HEK293 (cell line): ENCODE measurements at regions of chr6 and their contacts with region 1.

Region 1: DNA sequence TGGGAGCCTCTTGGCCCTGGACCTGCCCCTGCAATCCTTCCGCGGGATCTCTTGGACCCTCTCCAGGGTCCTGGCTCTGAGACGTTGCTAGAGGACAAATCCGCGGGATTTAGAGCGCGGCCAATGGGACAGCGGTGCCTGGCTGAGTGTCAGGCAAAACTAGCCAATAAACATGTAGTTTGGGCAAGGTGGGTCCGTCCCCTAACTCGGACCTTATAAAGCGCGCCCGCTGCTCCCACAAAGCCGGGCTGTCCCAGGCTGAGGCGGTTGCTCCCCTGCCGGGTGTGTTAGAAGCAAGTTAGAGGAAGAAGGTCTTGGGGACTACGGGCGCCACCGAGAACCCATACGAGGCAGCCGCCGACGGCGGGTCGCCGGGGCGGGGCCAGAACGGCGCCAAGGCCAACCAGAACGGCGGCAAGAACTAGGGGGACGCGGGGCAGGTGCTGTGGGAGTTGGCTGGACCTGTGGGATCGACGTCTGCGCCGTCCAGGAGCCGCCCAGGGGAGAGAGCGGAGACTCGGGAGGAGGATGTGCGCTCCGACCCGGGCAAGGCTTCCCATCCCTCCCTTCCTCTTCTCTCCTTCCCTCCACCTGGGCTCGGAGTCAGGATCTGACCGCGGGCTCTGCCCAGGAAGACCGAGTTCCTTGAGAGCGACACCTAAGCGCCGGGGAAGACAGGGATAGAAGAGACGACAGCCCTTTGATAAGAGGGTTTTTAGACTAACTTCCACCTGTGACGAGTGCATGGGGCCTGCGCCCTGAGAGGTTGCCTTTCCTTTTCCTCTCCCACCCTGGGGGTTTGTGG is 6.5 kb upstream of the TMEM14A start:
- H3K4me3 ChIP-seq: peak overlapping the region; percentile 52
- H3K27ac ChIP-seq: peak overlapping the region; percentile 76
- H3K4me1 ChIP-seq: peaks cover 10% of the 10 kb centered on the region; the same call in 1 of the 2 replicates
- CTCF ChIP-seq: 0 out of 2 replicates have a peak, but pooled peaks have one; percentile 39

Region 2: DNA sequence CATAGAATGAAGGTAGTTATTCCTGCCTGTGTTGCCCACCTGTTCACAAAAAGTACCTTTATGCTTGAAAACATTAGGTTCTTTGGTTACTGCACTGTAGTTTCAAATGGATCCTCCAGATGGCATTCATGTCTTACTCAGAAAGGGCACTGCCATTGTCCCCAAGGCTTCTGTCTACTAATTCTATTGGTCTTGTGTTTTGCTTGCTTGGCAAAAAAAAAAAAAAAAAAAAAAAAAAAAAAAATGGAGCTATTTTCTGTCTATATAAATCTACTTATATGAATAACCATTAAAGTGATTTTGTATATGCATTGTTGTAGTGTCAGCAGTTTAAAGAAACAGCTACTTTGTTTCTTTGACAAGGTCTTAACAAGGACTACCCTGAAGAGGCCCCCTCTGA is 256.9 kb before region 1 on chr6:
- CTCF ChIA-PET with region 1: interaction called, 104 read pairs
- POLR2A ChIA-PET with region 1: no interaction called
- H3K4me3 ChIP-seq: no peak overlapping the region
- H3K27ac ChIP-seq: no peak overlapping the region
- H3K4me1 ChIP-seq: no peaks in the 10 kb centered on the region
- CTCF ChIP-seq: peak; percentile 64

Region 3: GRCh38 chr6:52503848-52504781 is 160.3 kb before region 1 on chr6:
- CTCF ChIA-PET with region 1: interaction called, 12 read pairs
- POLR2A ChIA-PET with region 1: no interaction called
- H3K4me3 ChIP-seq: no peak overlapping the region; the same call in 1 of the 2 replicates
- H3K27ac ChIP-seq: peak overlapping the region; percentile 65
- H3K4me1 ChIP-seq: peaks cover 8% of the 10 kb centered on the region
- CTCF ChIP-seq: no peak

Region 4: DNA sequence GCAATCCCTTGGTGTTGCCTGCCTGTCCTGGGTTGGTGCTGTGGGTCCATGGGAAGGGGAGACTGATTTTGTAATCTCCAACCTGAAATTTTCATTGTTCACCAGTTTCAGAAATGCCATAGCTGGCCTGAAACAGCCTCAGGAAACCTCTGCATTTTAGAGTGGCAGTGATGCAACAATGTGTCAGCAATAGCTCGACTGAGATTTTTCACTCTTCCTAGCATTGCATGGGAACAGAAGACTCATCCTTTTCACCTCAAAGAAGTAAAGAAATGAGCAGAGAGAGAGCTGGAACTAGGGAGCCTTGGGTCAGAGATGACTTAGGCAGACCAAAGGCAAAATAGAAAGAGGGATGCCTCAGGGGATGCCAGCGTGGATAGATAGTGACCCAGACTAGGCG is 17.2 kb before region 1 on chr6:
- CTCF ChIA-PET with region 1: interaction called, 86 read pairs
- POLR2A ChIA-PET with region 1: interaction called, 3 read pairs
- H3K4me3 ChIP-seq: no peak overlapping the region
- H3K27ac ChIP-seq: no peak overlapping the region
- H3K4me1 ChIP-seq: no peaks in the 10 kb centered on the region; the same call in 1 of the 2 replicates
- CTCF ChIP-seq: no peak

Region 5: DNA sequence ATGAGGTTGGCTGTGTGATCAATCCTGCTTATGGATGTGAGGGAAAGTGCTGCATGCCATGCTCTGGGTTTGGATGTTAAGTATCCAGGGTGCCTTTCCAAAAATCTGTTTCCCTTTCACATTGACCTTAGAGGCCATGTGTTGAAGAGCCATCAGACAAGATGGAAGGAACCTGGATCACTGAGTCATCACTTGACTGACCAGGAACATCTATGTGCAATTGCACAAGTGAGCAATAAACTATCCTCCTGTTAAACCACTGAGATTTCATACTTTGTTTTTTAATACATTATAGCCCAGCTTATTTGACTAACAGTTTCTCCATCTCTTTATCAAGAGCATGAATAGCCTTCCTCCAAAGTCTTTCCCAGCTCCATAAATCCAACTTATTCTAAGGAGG is 11.2 kb before region 1 on chr6:
- CTCF ChIA-PET with region 1: interaction called, 86 read pairs
- POLR2A ChIA-PET with region 1: interaction called, 3 read pairs
- H3K4me3 ChIP-seq: no peak overlapping the region
- H3K27ac ChIP-seq: no peak overlapping the region
- H3K4me1 ChIP-seq: no peaks in the 10 kb centered on the region
- CTCF ChIP-seq: no peak

Region 6: GRCh38 chr6:52686878-52687699 is 22.7 kb after region 1 on chr6:
- CTCF ChIA-PET with region 1: no interaction called
- POLR2A ChIA-PET with region 1: no interaction called
- H3K4me3 ChIP-seq: no peak overlapping the region
- H3K27ac ChIP-seq: no peak overlapping the region
- H3K4me1 ChIP-seq: no peaks in the 10 kb centered on the region
- CTCF ChIP-seq: no peak